ENCODE measurements at regions of chr17 and their contacts with region 1.

Region 1: DNA sequence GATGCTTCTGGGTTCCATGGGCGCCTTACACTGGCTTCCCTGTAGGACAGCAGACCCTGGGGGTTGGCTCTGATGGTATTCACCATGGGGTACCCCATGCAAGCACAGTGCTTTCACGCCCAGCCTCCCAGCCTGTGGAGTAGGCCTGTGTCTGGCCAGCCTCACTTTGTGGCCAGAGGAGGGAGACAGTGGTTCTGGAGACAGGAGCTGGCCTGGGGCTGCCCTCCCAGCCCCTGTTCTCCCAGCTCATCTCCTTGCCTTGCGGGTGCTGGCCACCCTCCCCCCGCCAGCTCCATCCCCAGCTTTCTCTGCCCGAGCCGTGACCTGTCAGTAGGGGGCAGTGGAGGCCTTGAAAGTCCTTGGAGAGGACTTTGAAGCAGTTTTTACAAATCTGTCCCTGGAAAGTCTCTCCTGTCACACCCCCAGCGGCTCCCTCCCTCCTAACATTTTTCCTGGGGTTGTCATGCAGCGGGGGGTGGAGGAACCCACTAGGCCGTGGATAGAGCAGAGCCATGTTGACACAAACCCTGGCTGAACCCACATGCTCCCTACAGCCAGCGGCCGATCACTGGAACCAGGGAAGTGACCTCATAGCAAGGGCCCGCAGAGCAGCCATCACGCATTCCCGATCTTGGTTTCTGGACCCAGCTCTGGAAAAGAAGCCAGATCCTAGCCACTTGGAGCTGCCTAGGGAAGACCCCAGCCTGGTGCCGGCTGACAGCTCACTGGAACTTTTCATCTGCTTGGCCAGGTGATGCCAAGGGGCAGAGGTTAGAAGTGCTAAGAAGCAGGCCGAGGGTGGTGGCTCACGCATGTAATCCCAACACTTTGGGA is 289.4 kb downstream of the SEC14L1 start:
- DNase-seq: no peak
- ATAC-seq: peak; percentile 75
- H3K4me3 ChIP-seq: no peak overlapping the region
- H3K27ac ChIP-seq: no peak overlapping the region
- H3K4me1 ChIP-seq: peaks cover 74% of the 10 kb centered on the region
- H3K27me3 ChIP-seq: no peaks in the 10 kb centered on the region
- CTCF ChIP-seq: peak; percentile 81 to 89 (median 88)
- EP300 ChIP-seq: no peak
- POLR2A ChIP-seq: no peak
- RAD21 ChIP-seq: peak; percentile 94

Region 2: DNA sequence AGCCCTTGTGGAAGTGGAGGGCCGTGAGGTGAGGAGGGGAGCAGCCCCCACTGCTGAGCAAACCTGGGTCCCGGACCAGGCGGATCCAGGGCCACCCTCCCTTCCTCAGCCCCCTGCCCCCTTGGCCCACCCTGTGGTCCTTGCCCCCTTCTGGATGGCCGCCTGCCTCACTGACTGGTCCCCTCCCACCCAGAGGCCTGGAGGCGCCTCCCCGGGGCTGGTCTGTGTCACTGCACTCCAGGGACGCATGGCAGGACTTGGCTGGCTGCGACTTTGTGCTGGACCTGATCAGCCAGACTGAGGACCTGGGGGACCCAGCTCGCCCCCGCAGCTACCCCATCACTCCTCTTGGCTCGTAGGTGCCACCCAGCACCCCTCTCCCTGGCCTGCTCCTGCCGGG is 1816.1 kb before region 1 on chr17:
- CTCF ChIA-PET with region 1: no interaction called
- POLR2A ChIA-PET with region 1: no interaction called
- RAD21 ChIA-PET with region 1: no interaction called
- SMC1A ChIA-PET with region 1: no interaction called
- in situ Hi-C with region 1: no loop called
- intact Hi-C with region 1: no loop called
- DNase-seq: no peak
- ATAC-seq: peak; percentile 59
- H3K4me3 ChIP-seq: no peak overlapping the region
- H3K27ac ChIP-seq: no peak overlapping the region
- H3K4me1 ChIP-seq: no peaks in the 10 kb centered on the region
- H3K27me3 ChIP-seq: no peaks in the 10 kb centered on the region
- CTCF ChIP-seq: peak in 2 of 3 experiments; percentile 17 to 38; a peak in 3 of 6 replicates
- EP300 ChIP-seq: no peak
- POLR2A ChIP-seq: no peak
- RAD21 ChIP-seq: peak; percentile 24; the same call in 1 of the 2 replicates

Region 3: GRCh38 chr17:77404812-77405581 is 25.1 kb before region 1 on chr17:
- CTCF ChIA-PET with region 1: interaction called, 83 read pairs
- POLR2A ChIA-PET with region 1: interaction called, 7 read pairs
- RAD21 ChIA-PET with region 1: interaction called, 29 read pairs
- SMC1A ChIA-PET with region 1: interaction called, 46 read pairs
- in situ Hi-C with region 1: no loop called
- intact Hi-C with region 1: no loop called
- DNase-seq: peak; percentile 60
- ATAC-seq: peak; percentile 93
- H3K4me3 ChIP-seq: peak overlapping the region; percentile 59; the same call in 1 of the 2 replicates
- H3K27ac ChIP-seq: peak overlapping the region; percentile 77
- H3K4me1 ChIP-seq: peaks cover 36% of the 10 kb centered on the region
- H3K27me3 ChIP-seq: no peaks in the 10 kb centered on the region
- CTCF ChIP-seq: peak in 1 of 3 experiments; percentile 16; a peak in 1 of 6 replicates
- EP300 ChIP-seq: peak; percentile 27 to 44; a peak in 1 of 4 replicates
- POLR2A ChIP-seq: peak; percentile 78
- RAD21 ChIP-seq: no peak

Region 4: DNA sequence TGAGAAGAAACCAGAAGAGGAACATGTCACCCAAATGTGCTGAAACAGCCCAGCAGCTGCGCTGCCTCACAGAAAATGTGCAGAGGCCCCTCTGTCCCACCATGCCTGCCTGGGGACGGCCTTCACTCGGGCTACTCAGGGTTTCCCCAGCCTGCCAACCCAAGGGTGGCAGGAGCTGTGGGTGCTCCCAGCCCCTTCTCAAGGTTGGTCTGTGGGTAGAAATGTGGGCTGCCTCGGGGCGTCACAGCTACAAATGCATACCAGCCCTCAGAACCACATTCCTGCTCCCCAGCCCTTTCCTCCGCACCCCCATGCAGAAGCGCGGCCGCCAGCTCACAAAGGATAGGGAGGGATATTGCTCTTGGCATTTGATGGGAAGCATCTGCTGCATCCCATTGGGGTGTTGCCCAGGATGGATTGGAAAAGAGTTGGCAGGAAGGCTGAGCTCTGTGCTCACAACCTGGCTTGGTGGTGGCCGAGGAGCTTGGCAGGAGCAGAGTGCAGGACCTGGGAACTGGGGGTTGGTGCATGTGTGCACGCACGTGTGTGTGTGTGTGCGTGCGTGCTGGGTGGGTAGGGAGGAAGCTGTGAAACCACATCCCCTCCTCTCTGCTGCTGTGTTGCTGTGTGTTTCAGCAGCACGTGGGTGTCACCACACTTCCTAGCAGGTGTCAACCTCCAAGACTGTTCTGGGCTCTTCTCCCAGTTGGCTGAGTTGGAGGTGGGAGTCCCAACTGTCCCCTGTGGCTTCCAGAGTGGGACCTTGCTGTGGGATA is 15.0 kb after region 1 on chr17:
- CTCF ChIA-PET with region 1: interaction called, 59 read pairs
- POLR2A ChIA-PET with region 1: interaction called, 7 read pairs
- RAD21 ChIA-PET with region 1: interaction called, 52 read pairs
- SMC1A ChIA-PET with region 1: interaction called, 60 read pairs
- in situ Hi-C with region 1: no loop called
- intact Hi-C with region 1: no loop called
- DNase-seq: peak; percentile 92
- ATAC-seq: peak; percentile 49
- H3K4me3 ChIP-seq: peak overlapping the region; percentile 52; the same call in 1 of the 2 replicates
- H3K27ac ChIP-seq: peak overlapping the region; percentile 96
- H3K4me1 ChIP-seq: peaks cover 93% of the 10 kb centered on the region
- H3K27me3 ChIP-seq: no peaks in the 10 kb centered on the region
- CTCF ChIP-seq: no peak
- EP300 ChIP-seq: peak; percentile 98
- POLR2A ChIP-seq: peak; percentile 85
- RAD21 ChIP-seq: 0 out of 2 replicates have a peak, but pooled peaks have one; percentile 0

Region 5: DNA sequence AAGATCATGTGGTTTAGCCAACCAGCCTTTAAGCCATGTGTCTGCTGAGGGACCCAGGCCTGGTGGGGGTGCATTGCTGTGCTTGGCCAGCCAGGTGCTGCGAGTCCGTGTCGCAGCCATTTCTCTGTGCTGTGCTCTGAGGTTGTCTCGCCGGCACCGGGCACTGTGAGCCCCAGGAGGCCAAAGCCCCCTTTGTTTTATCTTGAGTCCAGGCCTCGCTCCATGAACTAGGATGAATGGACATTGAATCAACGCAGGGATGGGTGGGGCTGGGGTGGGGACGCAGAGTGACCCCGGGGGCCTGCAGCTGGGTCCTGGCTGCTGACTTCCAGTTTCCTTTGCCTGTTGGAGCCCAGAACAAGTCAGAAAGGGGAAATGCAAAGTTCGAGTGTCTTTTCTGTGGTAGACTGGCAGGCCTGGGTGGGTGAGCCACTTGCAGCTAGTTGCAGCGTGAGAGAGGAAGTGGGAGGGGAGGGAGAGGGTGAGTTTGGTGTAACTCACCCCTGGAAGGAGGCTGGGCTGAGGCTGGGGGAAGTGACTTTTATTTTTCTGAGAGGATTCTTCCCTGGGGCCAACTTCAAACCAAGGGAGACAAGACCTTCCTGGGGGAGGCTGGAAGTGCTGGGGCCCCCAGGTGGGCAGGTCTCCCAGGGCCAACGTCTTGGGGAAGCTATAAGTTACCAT is 35.4 kb after region 1 on chr17:
- CTCF ChIA-PET with region 1: interaction called, 12 read pairs
- POLR2A ChIA-PET with region 1: interaction called, 5 read pairs
- RAD21 ChIA-PET with region 1: interaction called, 35 read pairs
- SMC1A ChIA-PET with region 1: interaction called, 15 read pairs
- in situ Hi-C with region 1: no loop called
- intact Hi-C with region 1: no loop called
- DNase-seq: peak; percentile 86
- ATAC-seq: peak; percentile 82
- H3K4me3 ChIP-seq: peak overlapping the region; percentile 36; the same call in 1 of the 2 replicates
- H3K27ac ChIP-seq: peak overlapping the region; percentile 85
- H3K4me1 ChIP-seq: peaks cover 63% of the 10 kb centered on the region
- H3K27me3 ChIP-seq: no peaks in the 10 kb centered on the region
- CTCF ChIP-seq: no peak
- EP300 ChIP-seq: peak; percentile 29 to 50; a peak in 2 of 4 replicates
- POLR2A ChIP-seq: peak; percentile 48; the same call in 1 of the 2 replicates
- RAD21 ChIP-seq: no peak

Region 6: GRCh38 chr17:77476931-77477877 is 47.1 kb after region 1 on chr17:
- CTCF ChIA-PET with region 1: interaction called, 62 read pairs
- POLR2A ChIA-PET with region 1: interaction called, 21 read pairs
- RAD21 ChIA-PET with region 1: interaction called, 32 read pairs
- SMC1A ChIA-PET with region 1: interaction called, 45 read pairs
- in situ Hi-C with region 1: no loop called
- intact Hi-C with region 1: no loop called
- DNase-seq: no peak
- ATAC-seq: no peak
- H3K4me3 ChIP-seq: no peak overlapping the region
- H3K27ac ChIP-seq: no peak overlapping the region
- H3K4me1 ChIP-seq: peaks cover 42% of the 10 kb centered on the region
- H3K27me3 ChIP-seq: no peaks in the 10 kb centered on the region
- CTCF ChIP-seq: no peak
- EP300 ChIP-seq: no peak
- POLR2A ChIP-seq: no peak
- RAD21 ChIP-seq: no peak

Region 7: DNA sequence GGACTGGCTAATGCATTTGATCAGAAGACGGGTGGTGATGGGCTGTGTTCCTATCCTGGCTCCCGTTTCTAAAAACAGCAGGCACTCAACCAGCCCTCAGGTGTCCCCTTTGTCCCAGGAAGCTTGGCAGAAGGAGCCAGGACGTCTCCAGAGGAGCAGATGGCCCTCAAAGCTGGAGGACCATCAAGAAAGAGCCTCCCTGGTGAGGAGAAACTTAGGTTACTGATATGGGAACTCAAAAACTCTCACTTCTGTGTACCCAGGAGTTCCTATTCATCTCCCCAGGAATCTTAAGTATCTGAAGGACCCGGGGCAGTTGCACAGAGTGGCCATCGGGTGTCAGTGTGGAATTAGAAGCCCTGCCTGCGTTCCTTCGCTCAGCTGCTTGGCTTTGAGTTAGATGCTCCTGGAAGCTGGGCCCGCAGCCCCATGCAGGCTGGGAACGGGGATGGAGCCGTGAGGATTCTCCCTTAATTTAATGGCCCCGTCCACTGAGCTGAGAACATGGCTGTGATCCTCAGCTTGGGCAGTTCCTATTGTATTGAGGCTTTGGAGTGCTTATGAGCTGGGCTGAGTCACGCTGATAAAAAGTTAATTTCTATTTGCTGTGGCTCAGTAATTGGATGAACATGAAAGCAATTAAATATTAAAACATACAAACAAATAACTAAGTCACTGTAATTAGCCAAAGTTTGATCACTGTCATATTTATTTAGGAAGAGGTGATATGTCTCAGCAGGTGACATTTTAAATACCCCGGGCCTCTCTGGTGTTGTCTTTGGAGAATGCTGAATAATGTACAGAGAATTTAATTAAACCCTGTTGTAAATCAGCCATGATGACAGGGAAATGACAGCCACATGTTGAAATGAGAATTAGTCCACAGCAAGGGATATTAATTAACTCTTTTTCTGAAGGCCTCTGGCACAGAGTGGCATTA is 112.7 kb after region 1 on chr17:
- CTCF ChIA-PET with region 1: interaction called, 11 read pairs
- POLR2A ChIA-PET with region 1: no interaction called
- RAD21 ChIA-PET with region 1: interaction called, 3 read pairs
- SMC1A ChIA-PET with region 1: interaction called, 4 read pairs
- in situ Hi-C with region 1: no loop called
- intact Hi-C with region 1: no loop called
- DNase-seq: peak; percentile 5
- ATAC-seq: peak; percentile 91
- H3K4me3 ChIP-seq: no peak overlapping the region
- H3K27ac ChIP-seq: no peak overlapping the region
- H3K4me1 ChIP-seq: no peaks in the 10 kb centered on the region
- H3K27me3 ChIP-seq: peaks cover 0 to 1% of the 10 kb centered on the region in 2 experiments; a peak in 2 of 4 replicates
- CTCF ChIP-seq: peak; percentile 84 to 88 (median 86)
- EP300 ChIP-seq: no peak
- POLR2A ChIP-seq: no peak
- RAD21 ChIP-seq: peak; percentile 84

Region 8: GRCh38 chr17:77892469-77893143 is 462.5 kb after region 1 on chr17:
- CTCF ChIA-PET with region 1: no interaction called
- POLR2A ChIA-PET with region 1: no interaction called
- RAD21 ChIA-PET with region 1: no interaction called
- SMC1A ChIA-PET with region 1: no interaction called
- in situ Hi-C with region 1: no loop called
- intact Hi-C with region 1: no loop called
- DNase-seq: no peak
- ATAC-seq: peak; percentile 59
- H3K4me3 ChIP-seq: no peak overlapping the region
- H3K27ac ChIP-seq: no peak overlapping the region
- H3K4me1 ChIP-seq: no peaks in the 10 kb centered on the region; the same call in 1 of the 2 replicates
- H3K27me3 ChIP-seq: peaks cover 2 to 10% of the 10 kb centered on the region in 2 experiments
- CTCF ChIP-seq: peak; percentile 8 to 33 (median 12); a peak in 1 of 6 replicates
- EP300 ChIP-seq: no peak
- POLR2A ChIP-seq: no peak
- RAD21 ChIP-seq: no peak